GM12878 (cell line): ENCODE measurements at regions of chr9 and their contacts with region 1.

Region 1: GRCh38 chr9:37329576-37329975 is 92.9 kb upstream of the GRHPR start:
- DNase-seq: no peak
- ATAC-seq: peak; percentile 65
- H3K4me3 ChIP-seq: no peak overlapping the region
- H3K27ac ChIP-seq: no peak overlapping the region
- H3K4me1 ChIP-seq: peaks cover 18% of the 10 kb centered on the region
- H3K27me3 ChIP-seq: no peaks in the 10 kb centered on the region
- CTCF ChIP-seq: peak; percentile 47 to 73 (median 47); a peak in 4 of 6 replicates
- EP300 ChIP-seq: no peak
- POLR2A ChIP-seq: no peak
- RAD21 ChIP-seq: peak; percentile 79

Region 2: GRCh38 chr9:37004424-37004935 is 325.1 kb before region 1 on chr9:
- CTCF ChIA-PET with region 1: interaction called, 60 read pairs
- POLR2A ChIA-PET with region 1: interaction called, 3 read pairs
- RAD21 ChIA-PET with region 1: interaction called, 9 read pairs
- SMC1A ChIA-PET with region 1: interaction called, 12 read pairs
- in situ Hi-C with region 1: no loop called
- intact Hi-C with region 1: no loop called
- DNase-seq: no peak
- ATAC-seq: peak; percentile 47
- H3K4me3 ChIP-seq: peak overlapping the region; percentile 27; the same call in 1 of the 2 replicates
- H3K27ac ChIP-seq: peak overlapping the region; percentile 98
- H3K4me1 ChIP-seq: peaks cover 92% of the 10 kb centered on the region
- H3K27me3 ChIP-seq: no peaks in the 10 kb centered on the region
- CTCF ChIP-seq: no peak
- EP300 ChIP-seq: no peak
- POLR2A ChIP-seq: peak; percentile 38
- RAD21 ChIP-seq: no peak

Region 3: GRCh38 chr9:37197158-37198038 is 132.2 kb before region 1 on chr9:
- CTCF ChIA-PET with region 1: interaction called, 11 read pairs
- POLR2A ChIA-PET with region 1: interaction called, 3 read pairs
- RAD21 ChIA-PET with region 1: interaction called, 31 read pairs
- SMC1A ChIA-PET with region 1: interaction called, 15 read pairs
- in situ Hi-C with region 1: no loop called
- intact Hi-C with region 1: no loop called
- DNase-seq: peak; percentile 79
- ATAC-seq: peak; percentile 70
- H3K4me3 ChIP-seq: no peak overlapping the region; the same call in 1 of the 2 replicates
- H3K27ac ChIP-seq: peak overlapping the region; percentile 61
- H3K4me1 ChIP-seq: peaks cover 47% of the 10 kb centered on the region
- H3K27me3 ChIP-seq: no peaks in the 10 kb centered on the region
- CTCF ChIP-seq: no peak
- EP300 ChIP-seq: peak; percentile 34 to 55; a peak in 1 of 4 replicates
- POLR2A ChIP-seq: no peak
- RAD21 ChIP-seq: 0 out of 2 replicates have a peak, but pooled peaks have one; percentile 14

Region 4: GRCh38 chr9:37293664-37294524 is 35.7 kb before region 1 on chr9:
- CTCF ChIA-PET with region 1: interaction called, 21 read pairs
- POLR2A ChIA-PET with region 1: interaction called, 3 read pairs
- RAD21 ChIA-PET with region 1: interaction called, 38 read pairs
- SMC1A ChIA-PET with region 1: interaction called, 44 read pairs
- in situ Hi-C with region 1: no loop called
- intact Hi-C with region 1: no loop called
- DNase-seq: peak; percentile 91
- ATAC-seq: peak; percentile 73
- H3K4me3 ChIP-seq: no peak overlapping the region
- H3K27ac ChIP-seq: peak overlapping the region; percentile 90
- H3K4me1 ChIP-seq: peaks cover 60% of the 10 kb centered on the region
- H3K27me3 ChIP-seq: no peaks in the 10 kb centered on the region
- CTCF ChIP-seq: no peak
- EP300 ChIP-seq: peak; percentile 95 to 96
- POLR2A ChIP-seq: no peak
- RAD21 ChIP-seq: no peak

Region 5: DNA sequence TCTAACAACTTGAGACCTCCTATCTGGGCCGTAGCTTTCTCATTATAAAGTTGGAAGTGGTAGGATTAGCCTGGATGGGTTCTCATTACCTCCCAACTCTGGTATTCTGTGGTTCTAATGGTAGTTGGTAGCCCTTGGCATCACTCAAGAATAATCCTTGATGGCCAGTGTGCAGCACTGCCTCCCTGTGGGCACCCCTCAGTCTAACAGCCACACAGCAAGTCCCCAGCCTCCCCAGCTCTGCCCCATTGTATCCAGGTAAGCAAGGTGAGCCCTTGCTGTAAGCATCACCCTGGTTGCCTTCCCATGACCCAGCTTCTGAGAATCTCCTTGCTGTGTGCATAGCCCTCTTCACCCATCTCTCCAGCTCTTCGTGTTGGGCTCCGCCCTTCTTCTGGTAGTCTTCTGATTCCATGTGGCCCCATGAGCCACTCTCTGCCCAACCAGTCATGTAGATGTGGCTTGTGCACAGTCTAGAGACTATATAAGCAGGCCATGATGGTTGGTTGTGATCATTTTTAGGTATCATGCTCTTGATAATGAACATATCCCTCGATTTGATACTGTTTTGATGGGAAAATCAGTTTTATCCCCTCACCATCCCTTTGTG is 35.3 kb after region 1 on chr9:
- CTCF ChIA-PET with region 1: interaction called, 17 read pairs
- POLR2A ChIA-PET with region 1: interaction called, 5 read pairs
- RAD21 ChIA-PET with region 1: interaction called, 5 read pairs
- SMC1A ChIA-PET with region 1: interaction called, 11 read pairs
- in situ Hi-C with region 1: no loop called
- intact Hi-C with region 1: no loop called
- DNase-seq: no peak
- ATAC-seq: peak; percentile 67
- H3K4me3 ChIP-seq: no peak overlapping the region
- H3K27ac ChIP-seq: no peak overlapping the region
- H3K4me1 ChIP-seq: peaks cover 19% of the 10 kb centered on the region
- H3K27me3 ChIP-seq: no peaks in the 10 kb centered on the region
- CTCF ChIP-seq: peak; percentile 26 to 53 (median 48); a peak in 5 of 6 replicates
- EP300 ChIP-seq: no peak
- POLR2A ChIP-seq: no peak
- RAD21 ChIP-seq: peak; percentile 42; the same call in 1 of the 2 replicates

Region 6: GRCh38 chr9:37408933-37409710 is 79.5 kb after region 1 on chr9:
- CTCF ChIA-PET with region 1: interaction called, 20 read pairs
- POLR2A ChIA-PET with region 1: no interaction called
- RAD21 ChIA-PET with region 1: interaction called, 11 read pairs
- SMC1A ChIA-PET with region 1: interaction called, 16 read pairs
- in situ Hi-C with region 1: no loop called
- intact Hi-C with region 1: no loop called
- DNase-seq: peak; percentile 100
- ATAC-seq: peak; percentile 76
- H3K4me3 ChIP-seq: peak overlapping the region; percentile 57; the same call in 1 of the 2 replicates
- H3K27ac ChIP-seq: peak overlapping the region; percentile 100
- H3K4me1 ChIP-seq: peaks cover 66% of the 10 kb centered on the region
- H3K27me3 ChIP-seq: no peaks in the 10 kb centered on the region
- CTCF ChIP-seq: peak in 2 of 3 experiments; percentile 11 to 16; a peak in 1 of 6 replicates
- EP300 ChIP-seq: peak; percentile 98 to 99
- POLR2A ChIP-seq: peak; percentile 85
- RAD21 ChIP-seq: no peak